Left lung (tissue), 14 donors: ENCODE measurements at regions of chr4 and their contacts with region 1.

Region 1: GRCh38 chr4:38768968-38769394 is 13.8 kb downstream of the TLR10 start:
- DNase-seq: no peak
- ATAC-seq: no peak
- H3K4me3 ChIP-seq: no peak overlapping the region
- H3K27ac ChIP-seq: peak overlapping the region in 1 of 2 donors; percentile 63
- H3K4me1 ChIP-seq: peaks cover 0 to 10% of the 10 kb centered on the region in 2 donors
- H3K27me3 ChIP-seq: no peaks in the 10 kb centered on the region
- CTCF ChIP-seq: no peak

Region 2: DNA sequence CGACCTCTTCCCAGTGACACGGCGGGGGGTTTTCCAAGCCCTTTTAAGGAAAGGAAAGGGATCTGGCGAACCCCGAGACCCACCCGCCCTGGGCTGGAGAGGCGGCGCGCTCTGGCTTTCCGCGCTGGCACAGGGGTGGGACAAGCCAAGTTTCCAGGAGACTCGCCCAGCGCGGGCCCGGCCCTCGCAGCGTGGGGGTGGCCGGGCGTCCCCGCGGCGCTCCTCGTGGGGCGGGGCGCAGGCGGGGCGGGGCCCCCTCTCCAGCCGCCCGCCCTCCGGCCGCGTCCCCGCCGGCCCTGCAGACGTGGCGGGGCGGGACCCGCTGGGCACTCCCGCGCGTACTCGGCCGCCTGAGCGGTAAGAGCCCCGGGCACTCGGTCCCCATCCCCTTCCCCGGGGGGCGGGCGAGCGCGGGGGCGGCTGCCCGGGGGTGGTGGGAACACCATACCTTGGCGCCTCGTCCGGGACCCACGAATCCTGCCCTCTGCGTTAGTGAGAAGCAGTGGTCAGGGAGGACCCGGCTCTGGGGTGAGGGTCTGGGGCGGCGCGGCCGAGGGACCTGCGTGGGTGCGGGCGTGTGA is 98.6 kb after region 1 on chr4 and contains the start of gene FAM114A1:
- intact Hi-C with region 1: loop called in 1 of 2 experiments (anchors 10 kb)
- DNase-seq: peak; percentile 80 to 96 (median 90)
- ATAC-seq: peak; percentile 97
- H3K4me3 ChIP-seq: peak within 1 kb of the TSS; percentile 72 to 73
- H3K27ac ChIP-seq: peak within 1 kb of the TSS; percentile 87 to 95
- H3K4me1 ChIP-seq: peaks cover 8 to 40% of the 10 kb centered on the region in 2 donors
- H3K27me3 ChIP-seq: no peaks in the 10 kb centered on the region
- CTCF ChIP-seq: no peak
- polyA plus RNA-seq, gene FAM114A1: 51.5 to 79.3 (median 57.8) TPM